ENCODE measurements at regions of chr9 and their contacts with region 1.

Region 1: DNA sequence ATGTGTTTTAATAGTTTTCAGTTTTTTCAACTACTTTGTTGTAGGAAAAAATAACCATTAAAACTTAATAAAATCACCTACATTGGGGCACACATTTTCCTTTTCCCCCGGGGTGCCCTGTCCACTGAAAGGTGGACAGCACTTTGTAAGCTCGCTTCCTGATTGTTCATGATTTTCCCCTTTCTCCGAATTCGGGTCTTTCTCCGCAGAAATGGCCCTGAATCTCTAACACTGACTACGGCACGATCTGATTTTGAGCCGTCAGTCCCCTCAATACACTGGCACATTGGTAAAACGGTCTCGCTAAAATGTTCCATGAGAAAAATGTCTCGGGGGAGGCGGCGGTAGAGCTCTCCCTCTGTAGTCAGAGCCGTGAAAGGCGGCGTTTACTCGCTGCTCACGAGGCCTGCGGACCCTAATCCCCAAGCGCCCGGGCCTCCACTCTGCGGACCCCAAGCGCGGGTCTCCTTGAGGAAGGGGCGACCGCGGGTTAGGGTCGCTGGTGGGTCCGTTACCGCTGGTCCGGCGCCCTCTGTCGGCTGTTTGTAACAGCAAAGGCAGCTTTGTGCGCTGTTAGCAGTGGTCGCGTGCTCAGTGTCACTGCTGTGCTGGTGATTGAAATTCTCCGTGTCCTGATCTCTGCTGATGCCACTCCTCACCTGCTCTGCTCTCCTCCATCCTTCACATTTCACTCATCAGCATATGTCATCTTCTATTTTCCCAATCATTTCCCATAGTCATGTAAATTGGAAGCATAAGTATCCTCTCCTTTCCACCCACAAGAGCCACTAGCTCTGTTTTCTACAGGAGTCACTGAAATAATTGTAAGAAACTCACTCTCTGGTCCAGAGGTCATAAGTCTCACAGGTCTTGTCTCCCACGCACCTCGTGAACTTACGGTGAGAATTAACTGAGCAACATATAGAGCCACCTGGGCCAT is 10.8 kb upstream of the IFNA2 start:
- DNase-seq: peak in 1 of 2 experiments; percentile 42
- ATAC-seq: peak; percentile 74 to 86
- H3K4me3 ChIP-seq: peak overlapping the region; percentile 54
- H3K27ac ChIP-seq: peak overlapping the region in 1 of 2 experiments; percentile 47; a peak in 2 of 6 replicates
- H3K4me1 ChIP-seq: no peaks in the 10 kb centered on the region
- CTCF ChIP-seq: peak; percentile 93
- EP300 ChIP-seq: no peak
- POLR2A ChIP-seq: no peak
- RAD21 ChIP-seq: peak; percentile 39 to 71; a peak in 4 of 5 replicates

Region 2: DNA sequence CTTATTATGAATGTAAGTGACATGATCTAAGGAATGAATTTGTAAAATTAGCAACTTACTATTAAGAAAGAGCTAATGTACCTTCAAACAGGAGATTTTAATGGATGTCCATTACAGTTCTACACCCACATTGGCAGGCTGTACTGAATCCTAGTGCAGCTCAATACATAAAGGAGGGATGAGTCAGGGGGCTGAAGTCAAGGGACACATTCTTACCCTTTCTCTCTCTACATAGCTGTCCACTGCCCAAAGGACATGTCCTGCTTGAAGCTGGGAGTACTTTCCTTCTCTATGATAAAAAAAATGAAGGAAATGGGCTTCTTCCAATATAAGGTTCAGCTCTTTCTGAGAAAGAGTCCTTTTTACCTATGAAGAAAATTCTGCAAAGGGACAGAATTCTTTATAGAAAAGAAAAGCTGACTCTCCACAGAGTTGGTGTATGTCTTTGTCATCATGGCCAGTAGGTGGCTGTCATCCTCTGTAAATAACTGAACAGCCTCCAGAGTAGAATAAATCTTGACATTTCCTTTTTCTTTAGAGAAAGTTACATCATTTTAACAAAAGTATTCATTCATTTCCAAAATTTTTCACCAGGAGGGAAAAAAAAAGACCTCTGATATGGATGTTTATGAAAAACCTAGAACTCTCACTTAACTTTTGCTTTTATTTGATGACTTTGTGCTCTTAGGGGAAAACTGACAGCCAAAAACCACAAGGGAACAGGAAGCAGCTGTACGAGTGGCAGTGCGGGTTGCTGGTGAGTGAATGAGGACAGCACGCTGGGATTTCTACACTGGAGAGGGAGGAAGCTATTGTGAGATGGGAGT is 143.1 kb before region 1 on chr9:
- CTCF ChIA-PET with region 1: interaction called, 17 read pairs
- POLR2A ChIA-PET with region 1: no interaction called
- DNase-seq: peak; percentile 40 to 42
- ATAC-seq: peak; percentile 90 to 94
- H3K4me3 ChIP-seq: no peak overlapping the region
- H3K27ac ChIP-seq: no peak overlapping the region
- H3K4me1 ChIP-seq: no peaks in the 10 kb centered on the region
- CTCF ChIP-seq: peak; percentile 64
- EP300 ChIP-seq: no peak
- POLR2A ChIP-seq: no peak
- RAD21 ChIP-seq: peak; percentile 56 to 69

Region 3: DNA sequence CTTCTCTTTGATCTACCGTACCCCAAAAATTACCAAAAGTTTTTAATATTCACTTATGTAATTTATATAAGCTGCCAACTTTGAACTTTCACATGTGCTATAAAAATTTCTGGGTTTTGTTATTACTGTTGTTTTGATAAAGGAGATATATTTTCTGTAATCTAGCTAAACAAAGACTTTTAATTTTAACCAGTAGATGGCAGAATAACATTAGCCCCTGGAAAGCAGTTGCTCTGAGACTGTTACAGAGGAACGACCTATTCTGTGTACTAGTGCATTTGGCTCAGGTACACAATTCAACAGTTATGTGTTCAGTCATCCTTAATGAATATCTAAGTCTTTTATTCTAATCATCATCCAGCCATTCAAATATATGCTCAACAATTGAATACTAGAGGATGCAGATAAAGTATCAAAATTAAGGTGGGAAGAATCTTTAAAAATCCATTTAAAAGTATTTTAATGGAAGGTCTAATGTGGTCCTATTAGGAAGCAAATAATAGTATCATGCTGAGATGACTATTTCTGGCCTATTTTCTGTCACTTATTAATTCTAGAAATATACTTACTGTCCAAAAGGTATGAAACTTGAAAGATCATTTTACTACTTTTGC is 69.4 kb before region 1 on chr9:
- CTCF ChIA-PET with region 1: interaction called, 65 read pairs
- POLR2A ChIA-PET with region 1: no interaction called
- DNase-seq: peak; percentile 40 to 42
- ATAC-seq: peak; percentile 88 to 91
- H3K4me3 ChIP-seq: no peak overlapping the region
- H3K27ac ChIP-seq: no peak overlapping the region
- H3K4me1 ChIP-seq: peaks cover 14% of the 10 kb centered on the region; the same call in 2 of the 3 replicates
- CTCF ChIP-seq: peak; percentile 84
- EP300 ChIP-seq: no peak
- POLR2A ChIP-seq: no peak
- RAD21 ChIP-seq: peak; percentile 81 to 85

Region 4: DNA sequence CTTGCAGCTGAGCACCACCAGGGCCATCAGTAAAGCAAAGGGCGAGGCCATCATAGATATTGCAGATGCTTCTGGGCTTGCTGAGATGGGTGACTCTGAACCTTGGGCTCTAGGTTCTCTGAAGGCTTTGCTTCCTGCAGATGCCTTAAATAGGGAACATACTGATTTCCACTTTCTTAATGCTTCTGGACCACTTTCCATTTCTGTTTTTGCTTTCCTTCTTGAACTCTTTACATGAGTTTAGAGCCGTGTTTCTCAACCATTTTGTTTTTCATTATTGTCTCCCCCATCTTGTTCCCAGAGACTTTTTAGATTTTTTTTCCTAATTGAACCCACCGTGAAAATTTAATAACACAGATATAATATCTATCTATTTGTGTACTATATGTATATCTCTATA is 28.1 kb before region 1 on chr9 and contains the start of gene IFNA13:
- CTCF ChIA-PET with region 1: interaction called, 14 read pairs
- POLR2A ChIA-PET with region 1: no interaction called
- DNase-seq: no peak
- ATAC-seq: no peak
- H3K4me3 ChIP-seq: no peak within 1 kb of the TSS
- H3K27ac ChIP-seq: no peak within 1 kb of the TSS
- H3K4me1 ChIP-seq: no peaks in the 10 kb centered on the region
- CTCF ChIP-seq: no peak
- EP300 ChIP-seq: no peak
- POLR2A ChIP-seq: no peak
- RAD21 ChIP-seq: no peak
- polyA plus RNA-seq, gene IFNA13: not detected in 2 replicates

Region 5: DNA sequence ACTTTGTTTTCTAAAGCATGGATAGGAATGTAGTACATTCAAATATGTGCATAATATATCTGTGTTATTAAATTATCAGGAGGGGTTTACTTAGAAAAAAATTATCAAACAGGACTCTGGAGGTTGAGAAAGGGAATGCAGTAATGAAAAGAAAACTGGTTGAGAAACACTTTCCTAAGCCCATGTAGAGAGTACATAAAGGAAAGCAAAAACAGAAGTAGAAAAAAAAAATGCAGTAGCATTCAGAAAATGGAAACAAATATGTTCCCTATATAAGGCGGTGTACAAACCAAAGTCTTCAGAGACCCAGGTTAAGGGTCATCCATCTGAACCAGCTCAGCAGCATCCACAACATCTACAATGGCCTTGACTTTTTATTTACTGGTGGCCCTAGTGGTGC is 12.8 kb after region 1 on chr9 and contains the start of gene IFNA8:
- CTCF ChIA-PET with region 1: interaction called, 15 read pairs
- POLR2A ChIA-PET with region 1: no interaction called
- DNase-seq: no peak
- ATAC-seq: no peak
- H3K4me3 ChIP-seq: no peak within 1 kb of the TSS
- H3K27ac ChIP-seq: no peak within 1 kb of the TSS
- H3K4me1 ChIP-seq: no peaks in the 10 kb centered on the region
- CTCF ChIP-seq: no peak
- EP300 ChIP-seq: no peak
- POLR2A ChIP-seq: no peak
- RAD21 ChIP-seq: no peak
- polyA plus RNA-seq, gene IFNA8: not detected in 2 replicates

Region 6: DNA sequence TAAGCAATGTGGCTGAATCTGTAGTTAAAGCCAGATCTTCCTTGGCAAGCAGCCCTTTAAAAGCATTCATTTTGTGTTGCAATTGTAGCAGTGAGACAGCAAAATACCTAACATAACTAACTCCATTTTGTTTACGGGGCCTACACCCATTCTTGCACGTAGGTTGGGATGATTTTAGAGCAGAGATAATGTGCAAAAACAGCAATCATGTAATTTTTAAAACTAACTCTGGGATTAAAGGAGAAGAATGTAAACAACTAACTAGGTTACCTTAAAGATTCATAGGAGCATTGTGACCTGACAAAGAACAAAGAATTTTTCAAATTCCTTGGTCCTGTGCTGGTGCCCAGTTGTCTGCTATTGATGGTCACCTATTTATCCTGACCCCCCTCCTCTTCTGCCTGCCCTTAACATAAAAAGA is 54.8 kb after region 1 on chr9:
- CTCF ChIA-PET with region 1: no interaction called
- POLR2A ChIA-PET with region 1: no interaction called
- DNase-seq: peak in 1 of 2 experiments; percentile 9
- ATAC-seq: no peak
- H3K4me3 ChIP-seq: no peak overlapping the region
- H3K27ac ChIP-seq: no peak overlapping the region
- H3K4me1 ChIP-seq: peaks cover 8% of the 10 kb centered on the region; the same call in 1 of the 3 replicates
- CTCF ChIP-seq: no peak
- EP300 ChIP-seq: no peak
- POLR2A ChIP-seq: no peak
- RAD21 ChIP-seq: no peak

Region 7: DNA sequence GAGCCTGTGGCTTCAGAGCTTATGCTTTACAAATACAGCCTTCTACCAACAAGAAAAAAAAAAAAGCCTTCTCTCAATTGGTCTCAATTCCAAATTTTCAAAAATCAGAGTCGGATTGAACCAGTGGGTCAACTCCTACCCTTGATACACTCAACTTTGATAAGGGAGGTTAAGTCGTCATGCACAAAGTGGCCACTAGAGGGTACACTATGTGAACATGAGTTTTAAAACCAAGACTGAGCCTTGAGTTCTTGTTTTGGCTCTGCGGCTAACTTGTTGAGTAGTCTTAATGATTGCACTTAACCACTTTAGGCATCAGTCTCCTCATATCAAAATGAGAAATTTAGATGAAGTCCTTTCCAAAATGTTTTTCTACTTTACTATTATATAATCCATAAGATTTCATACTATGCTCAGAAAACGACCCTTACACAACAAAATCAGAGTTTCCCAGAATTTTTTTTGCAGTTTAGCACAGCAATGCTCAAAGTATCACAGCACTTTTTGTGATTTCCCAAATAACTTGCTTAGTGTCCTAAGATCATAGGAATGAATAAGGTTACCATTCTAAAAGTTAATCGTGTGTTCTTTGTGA is 313.5 kb after region 1 on chr9:
- CTCF ChIA-PET with region 1: no interaction called
- POLR2A ChIA-PET with region 1: no interaction called
- DNase-seq: peak; percentile 36 to 74
- ATAC-seq: peak; percentile 66 to 85; a peak in 4 of 6 replicates
- H3K4me3 ChIP-seq: no peak overlapping the region
- H3K27ac ChIP-seq: peak overlapping the region in 1 of 2 experiments; percentile 64; a peak in 2 of 6 replicates
- H3K4me1 ChIP-seq: peaks cover 18% of the 10 kb centered on the region; the same call in 2 of the 3 replicates
- CTCF ChIP-seq: peak; percentile 74
- EP300 ChIP-seq: no peak
- POLR2A ChIP-seq: no peak
- RAD21 ChIP-seq: peak; percentile 50 to 55

Measured in A549 (cell line).